ENCODE measurements at regions of chr17 and their contacts with region 1.

Region 1: GRCh38 chr17:8222630-8223356 is 12.4 kb upstream of the AURKB start:
- DNase-seq: peak; percentile 88
- H3K4me3 Mint-ChIP-seq: peak overlapping the region; percentile 87
- H3K27ac Mint-ChIP-seq: peak overlapping the region; percentile 99
- H3K4me1 Mint-ChIP-seq: peaks cover 20% of the 10 kb centered on the region
- H3K27me3 Mint-ChIP-seq: no peaks in the 10 kb centered on the region
- CTCF ChIP-seq: no peak

Region 2: DNA sequence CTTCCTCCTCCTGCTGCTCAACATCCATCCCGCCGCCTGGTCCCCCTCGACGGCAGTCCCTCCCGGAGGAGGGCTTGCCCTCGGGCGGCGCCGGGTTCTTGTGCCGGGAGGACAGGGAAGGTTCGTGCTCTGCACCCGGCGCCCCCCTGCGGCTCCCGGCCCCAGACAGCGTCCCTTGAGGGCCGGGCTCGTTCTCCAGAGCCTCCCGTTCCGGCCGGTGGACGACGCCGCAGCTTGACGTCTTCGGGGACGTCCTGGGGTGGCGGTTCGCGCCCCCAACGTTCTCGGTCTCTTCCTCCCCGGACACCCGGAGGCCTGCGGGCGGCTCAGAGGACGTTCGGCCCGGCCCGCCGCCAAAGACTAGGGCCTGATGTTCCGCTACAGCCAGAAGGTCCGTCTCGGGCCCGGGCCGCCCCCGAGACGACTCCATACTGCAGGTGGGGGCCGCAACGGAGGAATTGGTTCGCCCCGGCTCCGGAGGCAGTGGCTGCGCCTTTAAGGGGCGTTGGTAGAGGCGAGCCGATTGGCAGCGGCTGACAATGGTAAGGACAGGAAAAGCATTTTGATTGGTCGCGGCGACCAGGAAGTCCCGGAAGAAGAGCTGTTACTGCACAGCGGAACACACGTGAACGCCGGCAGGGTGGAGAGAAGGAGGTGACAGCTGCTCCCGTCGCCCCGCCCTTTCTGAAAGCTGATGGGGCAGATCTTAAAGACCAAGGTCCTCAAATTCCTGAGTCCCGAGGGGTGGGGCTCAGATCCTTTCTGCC is 32.9 kb before region 1 on chr17 and contains the start of gene BORCS6:
- CTCF ChIA-PET with region 1: interaction called, 3 read pairs
- intact Hi-C with region 1: loop called (anchors 2 kb)
- DNase-seq: peak; percentile 90
- H3K4me3 Mint-ChIP-seq: no peak within 1 kb of the TSS
- H3K27ac Mint-ChIP-seq: peak within 1 kb of the TSS; percentile 81
- H3K4me1 Mint-ChIP-seq: no peaks in the 10 kb centered on the region
- H3K27me3 Mint-ChIP-seq: no peaks in the 10 kb centered on the region
- CTCF ChIP-seq: no peak
- total RNA-seq, gene BORCS6: 3.7 and 3.9 TPM in 2 replicates

Region 3: DNA sequence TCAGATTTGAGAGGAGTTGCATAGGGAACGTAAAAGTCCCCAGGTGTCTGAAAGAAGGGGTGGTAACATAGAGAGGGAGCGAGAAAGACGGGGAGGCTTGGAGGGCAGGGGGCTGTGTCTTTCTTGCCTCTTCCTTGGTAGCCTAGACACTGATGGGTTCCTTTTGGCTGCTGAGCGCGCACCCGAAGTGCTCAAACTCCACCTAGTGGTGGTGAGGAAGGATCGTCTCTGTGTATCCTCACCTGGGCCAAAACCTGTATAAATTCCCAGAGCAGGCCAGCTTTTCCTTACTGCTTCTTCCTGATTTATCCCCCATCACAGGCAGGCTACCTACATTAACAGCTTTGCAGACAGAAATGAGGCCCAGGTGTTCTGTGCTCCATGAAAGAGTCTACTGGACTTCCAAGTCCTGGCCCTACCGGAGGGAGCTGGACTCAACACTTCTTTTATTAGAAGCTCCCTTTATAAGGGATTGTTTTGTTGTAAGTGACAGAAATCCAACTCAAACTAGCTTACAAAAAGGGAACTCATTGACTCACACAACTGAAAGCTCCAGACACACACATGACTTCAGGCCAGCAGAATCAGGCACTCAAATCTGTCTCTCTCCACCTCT is 77.9 kb after region 1 on chr17:
- CTCF ChIA-PET with region 1: interaction called, 5 read pairs
- intact Hi-C with region 1: loop called (anchors 10 kb)
- DNase-seq: peak; percentile 41
- H3K4me3 Mint-ChIP-seq: no peak overlapping the region
- H3K27ac Mint-ChIP-seq: no peak overlapping the region
- H3K4me1 Mint-ChIP-seq: peaks cover 9% of the 10 kb centered on the region
- H3K27me3 Mint-ChIP-seq: no peaks in the 10 kb centered on the region
- CTCF ChIP-seq: peak; percentile 79